Naive thymus-derived CD4-positive, alpha-beta T cell (primary cell): ENCODE measurements at regions of chr12 and their contacts with region 1.

Region 1: DNA sequence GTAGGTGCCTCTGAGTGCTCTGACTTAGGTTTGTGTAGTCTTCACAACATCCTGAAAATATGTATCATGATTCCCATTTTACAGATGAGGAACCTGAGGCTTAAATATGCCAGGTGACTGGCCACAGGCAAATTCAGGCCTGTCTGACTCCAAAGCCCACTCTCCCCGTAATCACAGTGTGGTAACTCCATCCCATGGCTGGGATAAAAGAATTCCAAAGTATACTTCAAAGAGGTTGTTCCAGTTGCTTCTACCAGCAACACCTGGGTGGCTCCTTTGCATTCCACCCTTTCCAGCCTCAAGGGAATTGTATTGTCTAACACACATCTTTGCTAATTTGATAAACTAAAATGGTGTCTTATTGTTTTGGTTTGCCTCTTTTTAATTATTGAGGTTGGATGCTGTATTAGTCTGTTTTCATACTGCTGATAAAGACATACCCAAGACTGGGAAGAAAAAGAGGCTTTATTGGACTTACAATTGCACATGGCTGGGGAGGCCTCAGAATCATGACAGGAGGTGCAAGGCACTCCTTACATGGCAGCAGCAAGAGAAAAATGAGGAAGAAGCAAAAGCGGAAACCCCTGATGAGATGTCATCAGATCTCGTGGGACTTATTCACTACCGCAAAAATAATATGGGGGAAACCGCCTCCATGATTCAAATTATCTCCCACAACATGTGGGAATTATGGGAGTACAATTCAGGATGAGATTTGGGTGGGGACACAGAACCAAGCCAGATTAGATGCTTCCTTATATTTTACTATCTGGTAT is 9.9 kb upstream of the CHST11 start:
- DNase-seq: no peak
- ATAC-seq: no peak
- H3K4me3 ChIP-seq: no peak overlapping the region
- H3K4me3 Mint-ChIP-seq: no peak overlapping the region
- H3K27ac ChIP-seq: no peak overlapping the region
- H3K27ac Mint-ChIP-seq: peak overlapping the region in 1 of 9 donors; percentile 16
- H3K4me1 ChIP-seq: no peaks in the 10 kb centered on the region
- H3K4me1 Mint-ChIP-seq: peaks cover 0 to 4% (median 0%) of the 10 kb centered on the region in 7 donors
- H3K27me3 ChIP-seq: no peaks in the 10 kb centered on the region
- H3K27me3 Mint-ChIP-seq: peaks cover 0 to 13% (median 0%) of the 10 kb centered on the region in 5 donors

Region 2: DNA sequence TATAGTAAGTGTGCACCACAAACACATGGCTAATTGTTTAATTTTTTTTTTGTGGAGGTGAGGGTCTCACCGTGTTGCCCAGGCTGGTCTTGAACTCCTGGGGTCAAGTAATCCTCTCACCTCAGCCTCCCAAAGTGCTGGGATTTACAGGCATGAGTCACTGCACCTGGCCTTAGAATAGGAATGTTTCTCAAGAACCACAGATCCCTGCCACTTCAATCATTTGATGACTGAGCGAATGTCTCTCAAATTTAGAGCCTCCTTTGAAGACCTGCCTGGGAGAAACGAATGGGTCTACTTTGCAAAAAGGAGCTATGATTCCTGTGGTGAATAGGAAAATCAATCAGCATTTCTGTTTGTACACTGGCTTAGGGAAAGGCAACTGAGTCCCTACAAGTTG is 23.6 kb before region 1 on chr12:
- CTCF ChIA-PET with region 1: no interaction called
- POLR2A ChIA-PET with region 1: interaction called, 11 read pairs
- intact Hi-C with region 1: no loop called
- DNase-seq: no peak
- ATAC-seq: no peak
- H3K4me3 ChIP-seq: no peak overlapping the region
- H3K4me3 Mint-ChIP-seq: no peak overlapping the region
- H3K27ac ChIP-seq: no peak overlapping the region
- H3K27ac Mint-ChIP-seq: no peak overlapping the region
- H3K4me1 ChIP-seq: peaks cover 0 to 8% of the 10 kb centered on the region in 2 donors
- H3K4me1 Mint-ChIP-seq: peaks cover 0 to 10% (median 5%) of the 10 kb centered on the region in 7 donors
- H3K27me3 ChIP-seq: no peaks in the 10 kb centered on the region
- H3K27me3 Mint-ChIP-seq: peaks cover 0 to 4% (median 0%) of the 10 kb centered on the region in 5 donors